Activated CD8-positive, alpha-beta T cell treated with anti-CD3 and anti-CD28 coated beads, Interleukin-2, amount 10 ng/mL, durations not matched to agents 7 days and 5 days (primary cell): ENCODE measurements at regions of chr13 and their contacts with region 1.

Region 1: GRCh38 chr13:102580552-102581169 is 16.1 kb upstream of the TPP2 start:
- DNase-seq: peak; percentile 66
- ATAC-seq: peak; percentile 81
- H3K4me3 Mint-ChIP-seq: no peak overlapping the region
- H3K27ac Mint-ChIP-seq: no peak overlapping the region
- H3K4me1 Mint-ChIP-seq: peaks cover 21% of the 10 kb centered on the region
- H3K27me3 Mint-ChIP-seq: peaks cover 8% of the 10 kb centered on the region

Region 2: GRCh38 chr13:102517959-102518358 is 62.7 kb before region 1 on chr13:
- CTCF ChIA-PET with region 1: no interaction called
- POLR2A ChIA-PET with region 1: no interaction called
- DNase-seq: no peak
- ATAC-seq: no peak
- H3K4me3 Mint-ChIP-seq: no peak overlapping the region
- H3K27ac Mint-ChIP-seq: no peak overlapping the region
- H3K4me1 Mint-ChIP-seq: no peaks in the 10 kb centered on the region
- H3K27me3 Mint-ChIP-seq: no peaks in the 10 kb centered on the region

Region 3: DNA sequence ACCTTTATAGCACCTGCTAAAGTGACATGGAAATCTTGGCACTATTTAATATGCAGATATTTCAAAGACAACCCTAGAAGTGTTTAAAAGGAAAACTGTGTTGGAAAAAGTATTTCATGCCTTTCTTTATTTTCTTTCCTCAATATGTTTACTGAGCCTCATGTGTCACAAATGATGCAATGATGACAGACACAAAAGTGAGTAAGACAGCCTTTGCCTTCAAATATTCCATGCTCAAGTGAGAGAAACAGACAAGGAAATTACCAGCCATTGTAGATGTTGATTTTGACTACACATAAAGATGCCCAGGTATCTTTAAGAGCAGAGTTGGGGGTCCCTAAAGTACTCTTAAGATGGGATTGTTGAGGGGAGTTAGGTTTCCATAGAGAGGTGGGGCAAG is 31.9 kb before region 1 on chr13:
- CTCF ChIA-PET with region 1: no interaction called
- POLR2A ChIA-PET with region 1: no interaction called
- DNase-seq: no peak
- ATAC-seq: no peak
- H3K4me3 Mint-ChIP-seq: no peak overlapping the region
- H3K27ac Mint-ChIP-seq: no peak overlapping the region
- H3K4me1 Mint-ChIP-seq: no peaks in the 10 kb centered on the region
- H3K27me3 Mint-ChIP-seq: peaks cover 9% of the 10 kb centered on the region

Region 4: DNA sequence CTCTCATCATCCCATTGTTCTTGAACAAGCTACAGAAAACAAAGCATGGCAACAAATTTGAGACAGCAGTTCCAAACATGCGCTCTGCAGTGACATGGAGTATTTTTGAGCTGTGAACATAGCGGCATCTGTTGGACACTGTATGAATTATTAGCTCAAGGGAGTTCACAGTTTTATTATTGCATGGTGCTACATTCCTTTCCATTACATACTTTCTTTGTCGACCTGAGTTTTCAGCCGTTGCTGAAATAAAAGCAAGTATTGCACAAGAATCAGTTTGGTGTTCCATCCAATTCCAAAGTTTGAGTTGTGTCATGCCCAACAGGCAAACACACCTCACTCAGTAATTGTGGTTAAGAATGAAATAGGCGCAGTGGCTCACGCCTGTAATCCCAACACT is 144.3 kb after region 1 on chr13:
- CTCF ChIA-PET with region 1: interaction called, 25 read pairs
- POLR2A ChIA-PET with region 1: no interaction called
- DNase-seq: peak; percentile 27
- ATAC-seq: peak; percentile 50
- H3K4me3 Mint-ChIP-seq: no peak overlapping the region
- H3K27ac Mint-ChIP-seq: no peak overlapping the region
- H3K4me1 Mint-ChIP-seq: peaks cover 6% of the 10 kb centered on the region
- H3K27me3 Mint-ChIP-seq: peaks cover 32% of the 10 kb centered on the region